Ovary (tissue), 10 donors: ENCODE measurements at regions of chr18 and their contacts with region 1.

Region 1: GRCh38 chr18:2932247-2933181 is 80.4 kb downstream of the LPIN2 start:
- DNase-seq: peak in 2 of 5 donors; percentile 33 to 53
- H3K4me3 ChIP-seq: no peak overlapping the region
- H3K27ac ChIP-seq: no peak overlapping the region
- H3K4me1 ChIP-seq: no peaks in the 10 kb centered on the region
- H3K27me3 ChIP-seq: no peaks in the 10 kb centered on the region
- CTCF ChIP-seq: peak; percentile 60 to 91 (median 75)
- EP300 ChIP-seq: no peak
- POLR2A ChIP-seq: no peak

Region 2: GRCh38 chr18:2985628-2986027 is 53.1 kb after region 1 on chr18:
- intact Hi-C with region 1: loop called in 1 of 4 experiments (anchors 10 kb)
- DNase-seq: no peak
- H3K4me3 ChIP-seq: no peak overlapping the region
- H3K27ac ChIP-seq: no peak overlapping the region
- H3K4me1 ChIP-seq: peaks cover 7% of the 10 kb centered on the region
- H3K27me3 ChIP-seq: no peaks in the 10 kb centered on the region
- CTCF ChIP-seq: peak in 2 of 3 donors; percentile 36 to 54
- EP300 ChIP-seq: no peak
- POLR2A ChIP-seq: no peak

Region 3: DNA sequence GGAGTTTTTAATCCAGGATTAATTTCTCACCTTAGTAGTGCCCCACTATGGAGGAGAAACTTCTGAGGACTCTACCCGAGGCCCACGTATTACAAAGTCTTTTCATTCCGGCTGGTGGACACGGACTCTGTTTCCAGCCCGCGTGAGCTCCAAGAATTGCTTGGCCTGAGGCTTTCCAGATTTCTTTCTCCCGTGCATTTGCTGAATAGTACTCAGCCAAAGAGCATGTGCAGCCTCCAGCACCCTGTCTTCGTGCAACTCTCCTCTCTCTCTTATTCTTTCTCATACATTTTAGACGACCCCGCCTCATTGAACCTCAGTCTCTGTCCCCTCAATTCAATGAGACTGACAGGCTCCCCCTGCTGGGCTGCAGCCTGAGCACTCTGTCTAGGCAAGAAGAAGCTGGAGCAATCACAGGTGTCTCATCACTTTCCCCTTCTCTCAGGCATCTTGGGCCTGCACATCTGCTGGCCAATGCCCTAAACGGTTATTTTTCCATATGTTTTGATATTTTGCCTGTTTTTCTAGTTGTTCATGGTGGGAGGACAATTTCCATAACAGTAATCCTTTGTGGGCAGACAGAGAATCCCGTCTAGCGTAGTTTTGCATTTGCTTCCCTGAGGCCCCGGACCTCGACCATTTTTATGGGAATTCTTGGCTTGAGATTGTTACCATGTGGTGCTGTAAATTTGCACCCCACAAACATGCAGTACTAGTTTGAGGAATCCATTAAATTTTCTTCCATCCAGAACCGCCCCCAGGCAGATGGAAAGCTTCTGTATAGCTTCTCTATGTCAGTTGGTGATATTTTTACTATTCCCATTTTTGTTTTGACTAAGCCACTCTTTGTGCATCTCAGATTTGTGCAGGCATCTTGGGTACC is 130.5 kb after region 1 on chr18:
- intact Hi-C with region 1: loop called in 3 of 4 experiments (anchors 5 to 10 kb)
- DNase-seq: peak; percentile 59 to 81 (median 71)
- H3K4me3 ChIP-seq: no peak overlapping the region
- H3K27ac ChIP-seq: no peak overlapping the region
- H3K4me1 ChIP-seq: no peaks in the 10 kb centered on the region
- H3K27me3 ChIP-seq: no peaks in the 10 kb centered on the region
- CTCF ChIP-seq: peak in 2 of 3 donors; percentile 51 to 55
- EP300 ChIP-seq: no peak
- POLR2A ChIP-seq: no peak

Region 4: DNA sequence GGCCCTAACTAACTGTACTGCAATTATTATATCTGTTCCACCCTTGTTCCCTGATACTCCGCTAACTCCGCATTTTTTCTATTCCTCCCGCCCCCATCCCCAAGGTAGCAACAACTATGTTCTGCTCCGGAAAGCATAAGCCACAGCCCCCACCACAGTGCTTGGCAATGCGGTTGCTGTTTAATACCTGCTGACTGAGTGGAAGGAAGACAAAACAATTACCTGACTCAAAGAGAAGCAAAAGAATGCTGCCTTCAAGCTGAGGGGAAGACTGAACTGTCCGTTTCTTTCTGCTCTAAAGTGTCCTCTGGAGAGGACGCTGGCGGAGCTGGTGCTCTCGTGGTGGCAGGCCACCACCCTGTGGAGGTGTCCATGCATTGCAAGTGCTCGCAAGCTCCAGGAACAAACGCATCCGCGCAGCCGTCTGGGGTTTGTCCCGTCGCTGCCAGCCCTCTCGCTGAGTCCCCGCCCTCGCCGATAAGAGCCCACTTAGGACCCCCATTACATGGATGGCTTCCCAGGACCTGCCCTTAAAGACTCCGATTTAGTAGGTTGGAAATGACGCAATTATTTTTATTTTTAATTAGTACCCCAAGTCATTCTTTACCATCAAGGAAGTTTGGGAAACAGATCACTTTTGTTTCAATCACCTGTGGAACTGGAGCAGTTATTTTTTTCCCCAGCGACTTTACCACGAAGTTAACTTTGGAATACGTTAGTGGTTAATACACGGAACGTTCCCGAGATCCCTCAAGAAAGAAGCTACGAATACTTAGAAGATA is 313.5 kb after region 1 on chr18:
- intact Hi-C with region 1: loop called (anchors 5 to 10 kb)
- DNase-seq: peak; percentile 84 to 91 (median 84)
- H3K4me3 ChIP-seq: peak overlapping the region; percentile 99
- H3K27ac ChIP-seq: peak overlapping the region; percentile 87 to 93
- H3K4me1 ChIP-seq: peaks cover 4% of the 10 kb centered on the region
- H3K27me3 ChIP-seq: no peaks in the 10 kb centered on the region
- CTCF ChIP-seq: peak; percentile 47 to 93 (median 80)
- EP300 ChIP-seq: no peak
- POLR2A ChIP-seq: peak; percentile 15